PC-3 (cell line): ENCODE measurements at regions of chr14 and their contacts with region 1.

Region 1: DNA sequence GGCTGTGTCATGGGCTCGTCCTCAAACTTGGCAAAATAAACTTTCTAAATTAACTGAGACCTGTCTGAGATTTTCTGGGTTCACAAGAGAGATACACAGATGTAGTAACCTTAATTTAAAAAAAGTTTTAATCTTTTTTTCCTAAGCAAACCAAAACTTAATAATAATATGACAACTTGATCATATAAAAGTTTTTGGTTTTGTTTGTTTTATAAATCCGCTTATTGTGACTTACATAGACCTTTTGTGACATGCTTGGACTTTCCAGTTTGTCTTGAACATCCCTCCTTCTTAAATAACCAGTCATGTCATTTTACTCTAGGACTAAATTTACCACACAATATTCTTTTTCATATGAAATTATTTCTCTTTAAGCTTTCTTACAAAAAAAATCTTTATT is 8.5 kb downstream of the RDH12 start:
- DNase-seq: peak; percentile 24
- ATAC-seq: no peak
- H3K4me3 ChIP-seq: no peak overlapping the region
- H3K27ac ChIP-seq: no peak overlapping the region
- H3K4me1 ChIP-seq: peaks cover 2% of the 10 kb centered on the region; the same call in 1 of the 2 replicates
- H3K27me3 ChIP-seq: no peaks in the 10 kb centered on the region
- CTCF ChIP-seq: no peak

Region 2: GRCh38 chr14:67377916-67378315 is 332.3 kb before region 1 on chr14:
- CTCF ChIA-PET with region 1: no interaction called
- POLR2A ChIA-PET with region 1: interaction called, 11 read pairs
- intact Hi-C with region 1: no loop called
- DNase-seq: no peak
- ATAC-seq: no peak
- H3K4me3 ChIP-seq: no peak overlapping the region
- H3K27ac ChIP-seq: no peak overlapping the region
- H3K4me1 ChIP-seq: no peaks in the 10 kb centered on the region
- H3K27me3 ChIP-seq: no peaks in the 10 kb centered on the region
- CTCF ChIP-seq: no peak

Region 3: GRCh38 chr14:67636361-67636919 is 73.8 kb before region 1 on chr14:
- CTCF ChIA-PET with region 1: no interaction called
- POLR2A ChIA-PET with region 1: no interaction called
- intact Hi-C with region 1: no loop called
- DNase-seq: no peak
- ATAC-seq: peak; percentile 79
- H3K4me3 ChIP-seq: no peak overlapping the region
- H3K27ac ChIP-seq: no peak overlapping the region
- H3K4me1 ChIP-seq: no peaks in the 10 kb centered on the region
- H3K27me3 ChIP-seq: no peaks in the 10 kb centered on the region
- CTCF ChIP-seq: no peak